ENCODE measurements at regions of chr3 and their contacts with region 1.

Region 1: DNA sequence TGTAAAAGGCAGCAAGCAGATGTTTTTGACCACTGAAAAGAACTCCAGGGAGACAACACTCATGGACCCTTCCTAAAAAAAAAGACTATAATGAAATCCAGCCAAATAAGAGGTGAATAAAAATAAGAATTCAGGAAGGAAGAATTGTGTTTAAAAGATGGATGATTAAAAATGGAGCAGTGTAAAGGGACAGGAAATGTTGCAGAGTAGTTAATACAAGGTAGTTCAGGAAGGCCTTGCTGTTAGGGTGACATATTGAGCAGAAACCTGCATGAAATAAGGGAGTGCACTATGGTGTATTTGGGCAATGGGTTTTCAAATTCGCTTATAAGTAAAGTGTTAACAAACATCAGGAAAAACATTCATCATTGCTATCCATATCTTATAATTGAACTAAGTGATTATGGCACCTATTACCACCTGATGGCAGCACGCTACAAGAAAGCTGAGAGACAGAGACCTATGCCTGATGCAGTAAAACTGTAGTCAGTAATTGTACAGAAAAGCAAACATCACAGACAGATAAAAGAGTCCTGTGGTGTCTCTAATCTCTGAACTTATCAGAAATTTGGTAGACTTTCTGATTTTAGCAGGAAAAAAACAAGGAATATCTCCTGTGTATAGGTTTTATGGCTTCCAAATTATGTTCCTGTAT is 5.8 kb upstream of the DBR1 start:
- DNase-seq: peak in 7 of 9 donors; percentile 16 to 53 (median 38)
- ATAC-seq: peak; percentile 95
- H3K4me3 ChIP-seq: no peak overlapping the region
- H3K4me3 Mint-ChIP-seq: no peak overlapping the region
- H3K27ac ChIP-seq: no peak overlapping the region
- H3K27ac Mint-ChIP-seq: no peak overlapping the region
- H3K4me1 ChIP-seq: no peaks in the 10 kb centered on the region
- H3K4me1 Mint-ChIP-seq: peaks cover 0 to 13% (median 5%) of the 10 kb centered on the region in 7 donors
- H3K27me3 ChIP-seq: no peaks in the 10 kb centered on the region
- H3K27me3 Mint-ChIP-seq: peaks cover 0 to 32% (median 9%) of the 10 kb centered on the region in 5 donors

Region 2: DNA sequence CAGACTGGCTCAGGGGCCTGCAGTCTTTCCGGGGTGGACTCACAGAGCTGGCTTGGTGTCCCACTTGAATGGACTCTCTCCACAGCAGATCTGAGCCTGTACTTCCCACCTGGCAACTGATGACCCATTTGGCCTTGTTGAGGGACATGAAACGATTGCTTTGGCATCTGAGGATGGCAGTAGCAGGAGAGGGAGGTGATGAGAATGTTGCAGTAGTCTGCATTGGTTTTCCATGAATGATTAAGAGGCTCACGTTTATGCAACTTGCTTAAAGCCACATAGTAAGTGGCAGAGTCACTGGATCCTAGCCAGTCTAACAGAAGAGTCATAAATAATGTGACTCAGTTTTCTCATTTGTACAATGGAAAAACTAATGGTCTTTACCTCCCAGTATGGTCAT is 1200.8 kb before region 1 on chr3:
- CTCF ChIA-PET with region 1: no interaction called
- POLR2A ChIA-PET with region 1: no interaction called
- intact Hi-C with region 1: no loop called
- DNase-seq: no peak
- ATAC-seq: no peak
- H3K4me3 ChIP-seq: no peak overlapping the region
- H3K4me3 Mint-ChIP-seq: no peak overlapping the region
- H3K27ac ChIP-seq: no peak overlapping the region
- H3K27ac Mint-ChIP-seq: no peak overlapping the region
- H3K4me1 ChIP-seq: no peaks in the 10 kb centered on the region
- H3K4me1 Mint-ChIP-seq: peaks cover 0 to 8% (median 7%) of the 10 kb centered on the region in 7 donors
- H3K27me3 ChIP-seq: no peaks in the 10 kb centered on the region
- H3K27me3 Mint-ChIP-seq: no peaks in the 10 kb centered on the region

Region 3: DNA sequence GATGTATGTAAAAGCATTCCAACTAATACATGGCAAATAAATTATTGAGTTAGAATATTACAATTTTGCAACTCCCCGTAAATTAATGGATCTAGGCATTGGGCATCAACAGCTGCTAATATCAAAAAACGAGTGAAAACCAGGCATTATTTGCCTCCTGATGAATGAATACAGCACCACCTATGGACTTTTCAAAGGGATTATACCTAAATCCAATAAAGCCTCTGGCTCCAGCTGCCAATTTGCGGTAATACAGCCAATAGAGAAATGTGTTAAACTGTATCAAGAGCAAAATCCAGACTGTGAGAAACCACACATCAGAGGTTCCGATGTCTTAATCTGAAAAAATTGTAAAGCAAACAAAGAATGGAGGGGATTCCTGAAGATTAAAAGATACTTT is 32.0 kb before region 1 on chr3:
- CTCF ChIA-PET with region 1: no interaction called
- POLR2A ChIA-PET with region 1: no interaction called
- intact Hi-C with region 1: no loop called
- DNase-seq: no peak
- ATAC-seq: no peak
- H3K4me3 ChIP-seq: no peak overlapping the region
- H3K4me3 Mint-ChIP-seq: no peak overlapping the region
- H3K27ac ChIP-seq: no peak overlapping the region
- H3K27ac Mint-ChIP-seq: no peak overlapping the region
- H3K4me1 ChIP-seq: no peaks in the 10 kb centered on the region
- H3K4me1 Mint-ChIP-seq: no peaks in the 10 kb centered on the region
- H3K27me3 ChIP-seq: no peaks in the 10 kb centered on the region
- H3K27me3 Mint-ChIP-seq: peaks cover 0 to 11% (median 0%) of the 10 kb centered on the region in 5 donors

Region 4: GRCh38 chr3:138199851-138200250 is 19.3 kb after region 1 on chr3:
- CTCF ChIA-PET with region 1: no interaction called
- POLR2A ChIA-PET with region 1: no interaction called
- intact Hi-C with region 1: no loop called
- DNase-seq: no peak
- ATAC-seq: peak; percentile 44
- H3K4me3 ChIP-seq: no peak overlapping the region
- H3K4me3 Mint-ChIP-seq: peak overlapping the region in 2 of 10 donors; percentile 4 to 20
- H3K27ac ChIP-seq: no peak overlapping the region
- H3K27ac Mint-ChIP-seq: no peak overlapping the region
- H3K4me1 ChIP-seq: no peaks in the 10 kb centered on the region
- H3K4me1 Mint-ChIP-seq: peaks cover 20 to 79% (median 72%) of the 10 kb centered on the region in 7 donors
- H3K27me3 ChIP-seq: no peaks in the 10 kb centered on the region
- H3K27me3 Mint-ChIP-seq: no peaks in the 10 kb centered on the region

Region 5: GRCh38 chr3:138230525-138230924 is 50.0 kb after region 1 on chr3:
- CTCF ChIA-PET with region 1: no interaction called
- POLR2A ChIA-PET with region 1: no interaction called
- intact Hi-C with region 1: loop called (anchors 1 to 5 kb)
- DNase-seq: no peak
- ATAC-seq: no peak
- H3K4me3 ChIP-seq: no peak overlapping the region
- H3K4me3 Mint-ChIP-seq: no peak overlapping the region
- H3K27ac ChIP-seq: no peak overlapping the region
- H3K27ac Mint-ChIP-seq: peak overlapping the region in 1 of 9 donors; percentile 51
- H3K4me1 ChIP-seq: no peaks in the 10 kb centered on the region
- H3K4me1 Mint-ChIP-seq: peaks cover 0 to 9% (median 2%) of the 10 kb centered on the region in 7 donors
- H3K27me3 ChIP-seq: no peaks in the 10 kb centered on the region
- H3K27me3 Mint-ChIP-seq: no peaks in the 10 kb centered on the region

Region 6: DNA sequence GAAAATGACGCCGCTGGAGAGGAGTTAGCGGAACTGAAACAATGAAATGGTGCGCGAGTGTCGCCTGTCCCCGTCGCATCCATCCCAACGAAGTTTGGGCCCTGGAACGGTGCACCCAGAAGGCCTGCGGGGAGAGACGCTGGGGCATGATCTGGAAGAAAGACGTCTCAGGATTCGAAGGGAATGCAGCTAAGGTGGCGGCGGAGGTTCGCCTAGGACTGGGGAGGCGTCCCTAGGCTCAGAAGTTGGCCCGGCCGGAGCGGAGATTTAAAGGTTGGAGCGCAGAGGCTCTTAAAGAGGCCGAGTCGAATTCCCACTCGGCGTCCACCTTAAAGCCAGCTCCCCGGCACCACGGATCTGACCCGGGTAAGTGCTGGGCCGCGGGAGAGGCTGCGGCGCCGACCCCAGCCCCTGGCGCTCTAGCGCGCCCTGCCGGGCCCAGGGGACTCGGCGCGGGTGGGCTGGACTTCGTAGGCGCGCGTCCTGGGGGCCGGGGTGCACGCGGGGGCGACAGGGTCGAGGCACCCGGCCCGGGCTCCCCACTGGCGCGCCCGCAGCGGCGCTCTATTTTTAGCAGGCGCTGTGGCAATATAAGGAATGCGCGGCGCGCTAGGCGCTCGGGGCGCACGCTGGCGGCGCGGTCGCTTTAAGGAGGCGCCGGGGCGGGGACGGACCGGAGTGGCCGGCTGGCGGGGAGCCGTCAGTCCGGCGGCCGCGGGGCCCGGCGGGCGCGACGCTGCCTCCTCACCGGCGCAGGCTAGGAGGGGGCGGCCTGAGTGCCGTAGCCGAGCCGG is 167.7 kb after region 1 on chr3 and contains the start of gene MRAS:
- CTCF ChIA-PET with region 1: interaction called, 3 read pairs
- POLR2A ChIA-PET with region 1: no interaction called
- intact Hi-C with region 1: loop called in 1 of 2 experiments (anchors 1 kb)
- DNase-seq: peak; percentile 10 to 44 (median 27)
- ATAC-seq: peak; percentile 68
- H3K4me3 ChIP-seq: peak within 1 kb of the TSS; percentile 50
- H3K4me3 Mint-ChIP-seq: peak within 1 kb of the TSS; percentile 90 to 99 (median 95)
- H3K27ac ChIP-seq: no peak within 1 kb of the TSS
- H3K27ac Mint-ChIP-seq: peak within 1 kb of the TSS in 3 of 9 donors; percentile 22 to 65 (median 41)
- H3K4me1 ChIP-seq: no peaks in the 10 kb centered on the region
- H3K4me1 Mint-ChIP-seq: peaks cover 0 to 11% (median 9%) of the 10 kb centered on the region in 7 donors
- H3K27me3 ChIP-seq: no peaks in the 10 kb centered on the region
- H3K27me3 Mint-ChIP-seq: peaks cover 26 to 43% (median 28%) of the 10 kb centered on the region in 5 donors
- total RNA-seq, gene MRAS: 0.05 to 4.9 (median 0.80) TPM

Region 7: DNA sequence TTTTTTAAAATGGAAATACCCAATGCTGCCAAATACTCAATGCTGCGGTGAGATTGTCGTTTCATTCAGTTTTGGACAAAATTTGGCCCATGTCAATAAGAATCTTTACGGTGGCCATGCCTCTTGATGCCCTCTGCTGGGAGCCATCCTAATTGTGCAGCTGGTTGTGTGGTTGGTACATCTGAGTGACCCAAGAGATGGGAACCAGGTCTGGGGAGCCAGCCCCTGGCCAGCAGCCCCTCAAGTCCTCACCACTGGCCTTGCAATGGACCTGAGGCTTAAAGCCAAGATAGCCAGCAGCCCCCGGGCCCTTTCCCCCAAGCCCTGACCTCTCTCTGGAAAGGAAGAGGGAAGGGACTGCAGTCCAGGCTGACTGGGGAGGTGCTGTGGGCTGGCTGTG is 217.5 kb after region 1 on chr3:
- CTCF ChIA-PET with region 1: no interaction called
- POLR2A ChIA-PET with region 1: no interaction called
- intact Hi-C with region 1: loop called in 1 of 2 experiments (anchors 1 kb)
- DNase-seq: peak in 1 of 9 donors; percentile 4
- ATAC-seq: no peak
- H3K4me3 ChIP-seq: no peak overlapping the region
- H3K4me3 Mint-ChIP-seq: no peak overlapping the region
- H3K27ac ChIP-seq: no peak overlapping the region
- H3K27ac Mint-ChIP-seq: no peak overlapping the region
- H3K4me1 ChIP-seq: no peaks in the 10 kb centered on the region
- H3K4me1 Mint-ChIP-seq: no peaks in the 10 kb centered on the region
- H3K27me3 ChIP-seq: no peaks in the 10 kb centered on the region
- H3K27me3 Mint-ChIP-seq: peaks cover 0 to 5% (median 0%) of the 10 kb centered on the region in 5 donors

Region 8: DNA sequence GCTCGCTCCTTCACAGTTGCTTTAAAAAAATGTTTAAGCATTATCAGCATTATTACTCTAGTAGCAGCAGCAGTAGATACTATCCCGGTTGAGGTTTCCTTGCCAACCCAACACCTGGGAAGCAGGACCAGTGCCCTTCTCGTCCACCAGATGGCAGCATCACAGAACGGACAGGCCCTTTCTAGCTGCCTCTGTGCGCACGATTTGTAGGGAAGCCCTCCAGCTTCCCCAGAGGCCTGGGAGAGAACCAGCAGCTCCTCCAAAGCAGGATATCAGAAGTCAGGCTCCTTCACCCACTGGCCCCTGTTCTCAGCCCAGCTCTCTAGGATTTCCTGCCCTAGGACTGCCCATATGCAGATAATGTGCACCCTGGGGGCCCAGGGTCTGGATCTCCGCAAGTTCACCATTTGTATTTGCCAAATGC is 237.1 kb after region 1 on chr3:
- CTCF ChIA-PET with region 1: no interaction called
- POLR2A ChIA-PET with region 1: no interaction called
- intact Hi-C with region 1: loop called in 1 of 2 experiments (anchors 1 kb)
- DNase-seq: peak; percentile 8 to 60 (median 47)
- ATAC-seq: peak; percentile 74
- H3K4me3 ChIP-seq: no peak overlapping the region
- H3K4me3 Mint-ChIP-seq: no peak overlapping the region
- H3K27ac ChIP-seq: no peak overlapping the region
- H3K27ac Mint-ChIP-seq: no peak overlapping the region
- H3K4me1 ChIP-seq: no peaks in the 10 kb centered on the region
- H3K4me1 Mint-ChIP-seq: peaks cover 0 to 7% (median 0%) of the 10 kb centered on the region in 7 donors
- H3K27me3 ChIP-seq: no peaks in the 10 kb centered on the region
- H3K27me3 Mint-ChIP-seq: peaks cover 12 to 28% (median 19%) of the 10 kb centered on the region in 5 donors

Region 9: DNA sequence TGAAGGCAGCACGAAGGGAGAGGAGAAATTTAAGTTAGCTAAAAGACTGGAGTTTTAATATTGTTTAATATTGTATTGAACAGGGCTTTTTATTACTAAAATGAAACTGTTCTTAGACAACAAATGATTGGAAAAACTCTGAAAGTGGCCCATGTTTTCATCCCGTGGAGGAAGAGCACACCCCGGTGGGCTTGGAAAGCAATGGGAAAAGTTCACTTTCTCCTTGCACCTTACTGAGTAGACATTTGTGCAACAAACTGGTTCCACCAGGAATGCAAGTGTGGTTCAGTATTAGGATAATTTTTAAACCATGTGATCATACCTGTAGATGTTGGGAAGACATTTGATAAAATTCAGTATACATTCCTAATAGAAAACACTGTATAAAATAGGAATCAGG is 245.7 kb after region 1 on chr3:
- CTCF ChIA-PET with region 1: no interaction called
- POLR2A ChIA-PET with region 1: no interaction called
- intact Hi-C with region 1: loop called in 1 of 2 experiments (anchors 1 kb)
- DNase-seq: no peak
- ATAC-seq: no peak
- H3K4me3 ChIP-seq: no peak overlapping the region
- H3K4me3 Mint-ChIP-seq: no peak overlapping the region
- H3K27ac ChIP-seq: no peak overlapping the region
- H3K27ac Mint-ChIP-seq: no peak overlapping the region
- H3K4me1 ChIP-seq: no peaks in the 10 kb centered on the region
- H3K4me1 Mint-ChIP-seq: no peaks in the 10 kb centered on the region
- H3K27me3 ChIP-seq: no peaks in the 10 kb centered on the region
- H3K27me3 Mint-ChIP-seq: peaks cover 2 to 17% (median 8%) of the 10 kb centered on the region in 5 donors

Measured in naive thymus-derived CD4-positive, alpha-beta T cell (primary cell).